ENCODE measurements at regions of chr10 and their contacts with region 1.

Region 1: DNA sequence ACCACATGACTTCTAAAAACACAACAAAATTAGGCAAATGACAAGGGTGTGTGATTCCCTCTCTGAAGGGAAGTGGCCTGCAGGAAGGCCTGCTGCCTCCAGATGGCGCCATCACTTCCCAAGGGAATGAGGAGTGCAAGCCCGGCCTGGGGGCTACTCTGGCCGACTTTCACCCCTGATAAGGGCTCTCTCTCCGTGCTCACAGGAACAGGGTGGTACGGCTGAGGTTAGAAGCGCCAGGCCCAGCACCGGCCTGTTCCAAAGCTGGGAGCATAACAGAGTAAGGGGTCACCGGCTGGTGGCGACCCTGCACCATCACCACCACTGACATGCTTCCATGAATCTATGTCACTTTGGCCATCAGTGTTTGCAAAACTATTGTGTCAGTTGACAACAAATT is 13.1 kb downstream of the RBP3 start:
- DNase-seq: peak; percentile 76 to 89 (median 84)
- ATAC-seq: peak; percentile 96
- H3K4me3 ChIP-seq: no peak overlapping the region
- H3K27ac ChIP-seq: no peak overlapping the region
- H3K4me1 ChIP-seq: peaks cover 0 to 3% of the 10 kb centered on the region in 2 experiments; a peak in 1 of 5 replicates
- H3K27me3 ChIP-seq: peaks cover 22 to 43% of the 10 kb centered on the region in 2 experiments
- CTCF ChIP-seq: peak; percentile 87 to 98 (median 94)
- EP300 ChIP-seq: no peak
- POLR2A ChIP-seq: no peak
- RAD21 ChIP-seq: peak; percentile 62 to 84

Region 2: DNA sequence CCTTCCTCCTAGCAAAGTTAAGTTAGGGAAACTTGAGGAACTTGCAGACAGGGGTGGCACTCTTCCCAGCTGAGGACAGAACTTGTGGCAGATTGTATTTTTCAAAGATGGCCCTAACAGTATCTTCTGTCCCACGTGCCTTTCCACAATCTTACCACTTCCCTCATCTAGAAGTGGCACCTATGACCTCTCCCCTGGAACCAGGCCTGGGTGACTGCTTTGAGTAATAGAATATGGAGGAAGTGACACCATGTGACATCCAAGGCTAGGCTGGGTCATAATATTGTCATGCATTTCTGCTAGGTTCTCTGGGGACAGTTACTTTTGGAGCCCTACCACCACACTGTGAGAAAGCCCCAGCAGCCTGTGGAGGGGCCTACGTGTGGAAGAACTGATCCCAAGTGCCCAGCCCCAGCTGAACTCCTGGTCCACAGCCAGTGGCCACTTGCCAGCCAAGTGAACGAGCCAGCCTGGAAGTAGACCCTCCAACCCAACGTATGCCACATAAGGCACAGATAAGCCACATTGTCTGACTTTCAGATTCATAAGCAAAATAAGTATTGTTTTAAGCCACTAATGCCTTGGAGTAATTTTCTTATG is 256.4 kb before region 1 on chr10:
- CTCF ChIA-PET with region 1: no interaction called
- POLR2A ChIA-PET with region 1: no interaction called
- in situ Hi-C with region 1: no loop called
- intact Hi-C with region 1: no loop called
- DNase-seq: no peak
- ATAC-seq: no peak
- H3K4me3 ChIP-seq: no peak overlapping the region
- H3K27ac ChIP-seq: no peak overlapping the region
- H3K4me1 ChIP-seq: no peaks in the 10 kb centered on the region
- H3K27me3 ChIP-seq: peaks cover 3 to 15% of the 10 kb centered on the region in 2 experiments; a peak in 4 of 5 replicates
- CTCF ChIP-seq: no peak
- EP300 ChIP-seq: no peak
- POLR2A ChIP-seq: no peak
- RAD21 ChIP-seq: no peak

Region 3: DNA sequence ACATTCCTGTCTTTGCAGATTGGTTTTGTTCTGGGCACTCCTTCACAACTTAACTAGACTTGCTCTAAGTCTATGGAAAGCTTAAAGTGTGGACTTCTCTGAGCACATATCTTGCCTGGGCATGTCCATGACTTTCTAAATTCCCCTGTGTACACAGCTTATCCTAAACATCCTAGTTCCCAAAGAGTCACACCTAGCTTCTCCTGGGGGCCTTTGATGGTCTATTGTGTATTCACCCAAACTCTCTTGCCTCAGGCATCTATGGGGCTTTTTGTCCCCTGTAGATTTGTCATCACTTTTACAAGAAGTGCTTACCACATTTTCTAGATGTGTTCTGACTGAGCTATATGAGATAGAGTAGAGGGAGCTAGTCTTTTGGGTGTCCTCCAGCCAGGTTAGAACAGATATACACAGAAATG is 35.0 kb after region 1 on chr10:
- CTCF ChIA-PET with region 1: no interaction called
- POLR2A ChIA-PET with region 1: no interaction called
- in situ Hi-C with region 1: no loop called
- intact Hi-C with region 1: loop called (anchors 2 kb)
- DNase-seq: no peak
- ATAC-seq: no peak
- H3K4me3 ChIP-seq: no peak overlapping the region
- H3K27ac ChIP-seq: no peak overlapping the region
- H3K4me1 ChIP-seq: no peaks in the 10 kb centered on the region
- H3K27me3 ChIP-seq: peaks cover 9 to 19% of the 10 kb centered on the region in 2 experiments; a peak in 3 of 5 replicates
- CTCF ChIP-seq: no peak
- EP300 ChIP-seq: no peak
- POLR2A ChIP-seq: no peak
- RAD21 ChIP-seq: no peak

Region 4: GRCh38 chr10:47406548-47406869 is 45.2 kb after region 1 on chr10:
- CTCF ChIA-PET with region 1: no interaction called
- POLR2A ChIA-PET with region 1: no interaction called
- in situ Hi-C with region 1: no loop called
- intact Hi-C with region 1: no loop called
- DNase-seq: no peak
- ATAC-seq: no peak
- H3K4me3 ChIP-seq: no peak overlapping the region
- H3K27ac ChIP-seq: no peak overlapping the region; the same call in 1 of the 3 replicates
- H3K4me1 ChIP-seq: peaks cover 16 to 35% of the 10 kb centered on the region in 2 experiments
- H3K27me3 ChIP-seq: peaks cover 0 to 8% of the 10 kb centered on the region in 2 experiments; a peak in 1 of 5 replicates
- CTCF ChIP-seq: no peak
- EP300 ChIP-seq: no peak
- POLR2A ChIP-seq: no peak
- RAD21 ChIP-seq: no peak

Region 5: DNA sequence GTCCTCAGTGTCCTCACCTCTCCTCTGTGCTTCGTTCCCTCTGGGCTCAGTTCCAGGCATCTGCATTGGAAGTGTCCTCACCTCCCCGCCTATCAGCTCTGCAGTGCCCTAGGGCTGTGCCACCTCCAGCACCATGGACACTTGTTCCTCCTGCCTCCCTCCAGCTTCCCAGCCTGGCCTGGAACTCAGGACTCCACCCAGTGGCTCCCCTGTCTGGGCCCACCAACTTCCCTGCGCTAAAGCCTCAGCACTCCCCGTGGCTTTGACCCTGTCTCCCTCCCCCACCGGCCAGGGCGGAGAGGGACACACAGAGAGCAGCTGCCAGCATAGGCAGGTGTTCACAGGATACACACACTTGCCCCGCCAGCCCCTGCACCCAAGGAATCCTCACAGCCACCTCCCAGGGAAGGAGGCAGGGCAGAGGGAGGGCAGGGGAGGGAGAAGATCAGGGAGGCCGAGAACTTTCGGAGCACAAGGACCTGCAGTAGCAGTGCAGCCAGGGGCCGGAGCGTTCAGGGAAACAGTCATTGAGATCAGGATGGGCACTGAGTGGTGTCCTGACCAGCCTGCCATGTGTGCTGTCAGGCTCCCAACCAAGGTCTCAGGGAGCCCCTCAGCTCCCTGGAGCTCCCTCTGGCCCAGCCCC is 91.3 kb after region 1 on chr10:
- CTCF ChIA-PET with region 1: no interaction called
- POLR2A ChIA-PET with region 1: interaction called, 3 read pairs
- in situ Hi-C with region 1: no loop called
- intact Hi-C with region 1: loop called (anchors 5 kb)
- DNase-seq: peak in 1 of 4 experiments; percentile 7
- ATAC-seq: peak; percentile 19; the same call in 2 of the 3 replicates
- H3K4me3 ChIP-seq: no peak overlapping the region
- H3K27ac ChIP-seq: no peak overlapping the region
- H3K4me1 ChIP-seq: peaks cover 0 to 8% of the 10 kb centered on the region in 2 experiments; a peak in 1 of 5 replicates
- H3K27me3 ChIP-seq: peaks cover 21 to 62% of the 10 kb centered on the region in 2 experiments; a peak in 4 of 5 replicates
- CTCF ChIP-seq: no peak
- EP300 ChIP-seq: no peak
- POLR2A ChIP-seq: no peak
- RAD21 ChIP-seq: no peak

Measured in K562 (cell line).